Caco-2 (cell line): ENCODE measurements at regions of chr11 and their contacts with region 1.

Region 1: DNA sequence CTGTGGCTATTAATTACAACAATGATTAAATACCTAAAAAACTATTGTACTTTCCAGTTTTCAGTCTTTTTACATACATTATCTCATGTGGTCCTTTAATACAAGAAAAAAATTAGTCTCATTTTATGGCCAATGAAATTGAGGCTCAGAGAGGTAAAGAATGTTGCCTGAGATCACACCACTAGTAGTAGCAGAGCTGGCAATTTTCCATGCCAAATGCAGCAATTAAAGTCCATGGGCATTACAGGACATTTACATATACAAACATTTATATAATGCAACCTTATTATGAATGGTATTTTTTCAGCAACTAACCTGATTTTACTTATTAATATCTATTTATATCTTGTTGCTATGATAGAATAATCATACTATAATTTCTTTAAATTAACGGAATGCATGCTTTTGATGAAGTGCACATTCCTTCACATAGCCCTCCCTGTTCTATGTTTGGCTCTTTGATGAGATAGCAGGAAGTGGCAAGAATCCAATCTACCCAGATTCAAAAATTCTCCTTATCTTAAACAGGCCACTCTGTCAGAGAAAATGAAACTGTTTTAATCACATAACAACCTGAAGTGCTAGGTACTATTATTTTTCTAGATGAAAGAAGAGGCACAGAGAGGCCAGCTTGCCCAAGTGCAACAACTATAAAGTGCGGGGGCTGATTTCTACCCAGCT is 120.9 kb upstream of the LDLRAD3 start:
- DNase-seq: no peak
- H3K4me3 ChIP-seq: no peak overlapping the region
- H3K4me3 Mint-ChIP-seq: no peak overlapping the region
- H3K27ac Mint-ChIP-seq: no peak overlapping the region
- H3K4me1 ChIP-seq: peaks cover 14% of the 10 kb centered on the region
- H3K4me1 Mint-ChIP-seq: peaks cover 15% of the 10 kb centered on the region
- H3K27me3 ChIP-seq: no peaks in the 10 kb centered on the region
- H3K27me3 Mint-ChIP-seq: no peaks in the 10 kb centered on the region
- CTCF ChIP-seq: no peak

Region 2: DNA sequence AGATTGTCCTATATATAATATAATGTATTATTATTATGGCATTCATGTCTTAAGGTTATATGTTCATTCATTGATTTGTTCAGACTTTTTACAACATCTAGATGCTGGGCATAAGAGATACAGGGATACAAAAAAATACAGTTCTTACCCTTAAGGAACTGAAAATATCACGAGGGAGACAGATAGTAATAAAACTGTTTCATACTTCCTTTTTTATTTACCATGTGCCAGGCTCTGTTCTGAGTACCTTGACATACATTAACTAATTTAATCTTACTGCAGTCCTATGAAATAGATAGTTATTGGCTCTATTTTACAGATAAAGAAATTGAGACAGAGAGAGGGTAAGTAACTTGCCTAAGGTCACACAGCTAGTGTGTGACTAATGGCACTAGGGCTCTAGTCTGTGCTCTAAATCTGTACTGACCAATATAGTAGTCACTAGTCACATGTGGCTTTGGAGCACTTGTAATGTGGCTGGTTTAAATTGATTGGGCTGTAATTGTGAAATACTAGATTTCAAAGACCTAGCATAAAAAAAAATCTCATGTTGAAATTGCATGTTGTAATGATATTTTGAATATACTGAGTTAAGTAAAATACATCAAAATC is 139.1 kb before region 1 on chr11:
- CTCF ChIA-PET with region 1: interaction called, 14 read pairs
- POLR2A ChIA-PET with region 1: no interaction called
- intact Hi-C with region 1: no loop called
- DNase-seq: no peak
- H3K4me3 ChIP-seq: no peak overlapping the region
- H3K4me3 Mint-ChIP-seq: no peak overlapping the region
- H3K27ac Mint-ChIP-seq: no peak overlapping the region
- H3K4me1 ChIP-seq: peaks cover 32% of the 10 kb centered on the region
- H3K4me1 Mint-ChIP-seq: peaks cover 32% of the 10 kb centered on the region
- H3K27me3 ChIP-seq: no peaks in the 10 kb centered on the region
- H3K27me3 Mint-ChIP-seq: no peaks in the 10 kb centered on the region
- CTCF ChIP-seq: no peak

Region 3: GRCh38 chr11:35771722-35772121 is 51.2 kb before region 1 on chr11:
- CTCF ChIA-PET with region 1: no interaction called
- POLR2A ChIA-PET with region 1: no interaction called
- intact Hi-C with region 1: no loop called
- DNase-seq: no peak
- H3K4me3 ChIP-seq: no peak overlapping the region
- H3K4me3 Mint-ChIP-seq: no peak overlapping the region
- H3K27ac Mint-ChIP-seq: no peak overlapping the region
- H3K4me1 ChIP-seq: no peaks in the 10 kb centered on the region
- H3K4me1 Mint-ChIP-seq: no peaks in the 10 kb centered on the region
- H3K27me3 ChIP-seq: no peaks in the 10 kb centered on the region
- H3K27me3 Mint-ChIP-seq: no peaks in the 10 kb centered on the region
- CTCF ChIP-seq: no peak

Region 4: DNA sequence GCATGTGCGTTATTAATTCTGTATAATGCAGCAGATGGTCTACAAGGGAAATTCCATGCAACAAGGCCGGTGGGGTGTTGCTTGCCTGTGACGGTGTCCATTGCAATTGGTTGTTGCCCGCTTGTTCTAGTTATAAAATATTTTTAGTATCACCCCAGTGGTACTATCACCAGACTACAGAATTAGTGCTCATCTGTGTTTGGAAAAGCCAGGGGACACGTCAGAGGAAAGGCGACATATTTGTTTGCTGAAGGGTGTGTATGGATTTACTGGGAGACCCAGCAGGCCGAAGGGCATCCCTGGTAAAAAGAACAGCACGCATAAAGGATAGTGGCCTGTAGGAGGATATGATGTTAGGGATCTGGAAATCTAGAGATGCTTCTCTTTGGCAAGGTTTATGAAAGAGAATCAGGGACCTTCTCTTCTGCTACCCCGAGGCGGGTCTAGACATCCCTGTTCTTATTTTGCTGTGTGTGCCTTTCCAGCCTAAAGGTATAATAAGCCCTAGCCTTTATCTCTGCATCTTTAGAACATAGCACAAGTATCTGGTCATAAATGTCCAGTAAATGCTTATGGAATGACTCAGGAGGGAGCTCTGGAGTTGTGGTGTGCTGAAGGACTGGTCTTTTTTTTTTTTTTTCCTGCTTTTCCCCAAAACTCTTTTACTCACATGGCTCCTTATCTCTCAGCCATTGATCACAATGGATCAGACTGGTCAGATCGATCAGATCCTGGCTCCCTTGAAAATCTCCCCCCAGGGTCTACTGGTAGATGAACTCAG is 211.8 kb after region 1 on chr11:
- CTCF ChIA-PET with region 1: interaction called, 5 read pairs
- POLR2A ChIA-PET with region 1: no interaction called
- intact Hi-C with region 1: loop called (anchors 2 kb)
- DNase-seq: peak; percentile 54 to 58
- H3K4me3 ChIP-seq: no peak overlapping the region
- H3K4me3 Mint-ChIP-seq: peak overlapping the region; percentile 60
- H3K27ac Mint-ChIP-seq: peak overlapping the region; percentile 78
- H3K4me1 ChIP-seq: peaks cover 51% of the 10 kb centered on the region
- H3K4me1 Mint-ChIP-seq: peaks cover 45% of the 10 kb centered on the region
- H3K27me3 ChIP-seq: no peaks in the 10 kb centered on the region
- H3K27me3 Mint-ChIP-seq: no peaks in the 10 kb centered on the region
- CTCF ChIP-seq: no peak

Region 5: DNA sequence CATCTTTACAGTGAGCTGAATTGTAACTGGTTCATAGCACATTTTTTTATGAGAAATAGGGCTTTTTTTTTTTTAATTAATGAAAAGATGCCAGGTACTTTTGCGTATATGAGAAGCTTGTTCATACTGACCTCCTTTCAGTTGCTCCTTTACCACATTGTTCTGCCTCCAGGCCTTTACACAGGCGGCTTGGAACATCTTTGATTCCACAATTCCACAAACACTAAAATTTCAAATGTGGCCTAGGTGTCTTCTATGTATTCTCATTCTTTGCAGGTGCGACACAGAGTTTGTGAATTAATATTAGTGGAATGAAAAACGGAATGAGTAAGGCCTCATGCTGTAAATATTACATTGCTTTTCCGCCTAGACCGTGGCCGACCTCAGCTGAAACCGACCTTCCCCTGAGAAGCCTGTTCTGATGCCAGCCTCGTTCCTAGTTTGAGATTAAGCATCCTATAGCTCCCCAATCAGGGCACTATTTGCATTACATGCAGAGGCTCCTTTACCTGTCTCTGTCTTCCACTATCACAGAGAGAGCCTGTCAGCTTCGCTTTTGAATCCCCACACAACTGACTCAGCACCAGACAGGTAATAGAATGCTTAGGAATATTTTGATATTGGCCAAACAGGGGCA is 246.7 kb after region 1 on chr11:
- CTCF ChIA-PET with region 1: interaction called, 11 read pairs
- POLR2A ChIA-PET with region 1: no interaction called
- intact Hi-C with region 1: no loop called
- DNase-seq: peak in 1 of 2 experiments; percentile 14
- H3K4me3 ChIP-seq: no peak overlapping the region
- H3K4me3 Mint-ChIP-seq: no peak overlapping the region
- H3K27ac Mint-ChIP-seq: no peak overlapping the region
- H3K4me1 ChIP-seq: no peaks in the 10 kb centered on the region
- H3K4me1 Mint-ChIP-seq: no peaks in the 10 kb centered on the region
- H3K27me3 ChIP-seq: no peaks in the 10 kb centered on the region
- H3K27me3 Mint-ChIP-seq: no peaks in the 10 kb centered on the region
- CTCF ChIP-seq: peak in 1 of 2 experiments; percentile 24

Region 6: GRCh38 chr11:36098087-36098486 is 275.1 kb after region 1 on chr11:
- CTCF ChIA-PET with region 1: no interaction called
- POLR2A ChIA-PET with region 1: no interaction called
- intact Hi-C with region 1: no loop called
- DNase-seq: no peak
- H3K4me3 ChIP-seq: no peak overlapping the region
- H3K4me3 Mint-ChIP-seq: no peak overlapping the region
- H3K27ac Mint-ChIP-seq: no peak overlapping the region
- H3K4me1 ChIP-seq: no peaks in the 10 kb centered on the region
- H3K4me1 Mint-ChIP-seq: peaks cover 18% of the 10 kb centered on the region
- H3K27me3 ChIP-seq: no peaks in the 10 kb centered on the region
- H3K27me3 Mint-ChIP-seq: no peaks in the 10 kb centered on the region
- CTCF ChIP-seq: no peak

Region 7: GRCh38 chr11:36258730-36259360 is 435.9 kb after region 1 on chr11:
- CTCF ChIA-PET with region 1: interaction called, 69 read pairs
- POLR2A ChIA-PET with region 1: no interaction called
- intact Hi-C with region 1: loop called (anchors 2 kb)
- DNase-seq: peak; percentile 73 to 76
- H3K4me3 ChIP-seq: no peak overlapping the region
- H3K4me3 Mint-ChIP-seq: no peak overlapping the region
- H3K27ac Mint-ChIP-seq: peak overlapping the region; percentile 43
- H3K4me1 ChIP-seq: peaks cover 12% of the 10 kb centered on the region; the same call in 1 of the 2 replicates
- H3K4me1 Mint-ChIP-seq: peaks cover 12% of the 10 kb centered on the region
- H3K27me3 ChIP-seq: no peaks in the 10 kb centered on the region
- H3K27me3 Mint-ChIP-seq: no peaks in the 10 kb centered on the region
- CTCF ChIP-seq: peak; percentile 62 to 79